GM13976 (cell line): ENCODE measurements at regions of chr2 and their contacts with region 1.

Region 1: GRCh38 chr2:28960401-28960800 is 20.7 kb upstream of the TOGARAM2 start:
- DNase-seq: no peak
- CTCF ChIP-seq: no peak

Region 2: GRCh38 chr2:29206941-29207340 is 246.5 kb after region 1 on chr2:
- in situ Hi-C with region 1: loop called (anchors 10 kb)
- DNase-seq: no peak
- CTCF ChIP-seq: no peak